WTC11 (cell line): ENCODE measurements at regions of chr2 and their contacts with region 1.

Region 1: GRCh38 chr2:43559391-43560230 is 36.2 kb downstream of the THADA start:
- DNase-seq: no peak
- ATAC-seq: no peak
- H3K4me3 Mint-ChIP-seq: no peak overlapping the region
- H3K27ac Mint-ChIP-seq: no peak overlapping the region
- H3K4me1 Mint-ChIP-seq: peaks cover 13% of the 10 kb centered on the region
- H3K27me3 Mint-ChIP-seq: no peaks in the 10 kb centered on the region; the same call in 1 of the 2 replicates
- CTCF ChIP-seq: no peak

Region 2: GRCh38 chr2:43513216-43513615 is 46.4 kb before region 1 on chr2:
- CTCF ChIA-PET with region 1: no interaction called
- POLR2A ChIA-PET with region 1: no interaction called
- DNase-seq: no peak
- ATAC-seq: no peak
- H3K4me3 Mint-ChIP-seq: no peak overlapping the region
- H3K27ac Mint-ChIP-seq: no peak overlapping the region
- H3K4me1 Mint-ChIP-seq: peaks cover 12% of the 10 kb centered on the region
- H3K27me3 Mint-ChIP-seq: no peaks in the 10 kb centered on the region
- CTCF ChIP-seq: no peak

Region 3: GRCh38 chr2:43542285-43542937 is 17.2 kb before region 1 on chr2:
- CTCF ChIA-PET with region 1: no interaction called
- POLR2A ChIA-PET with region 1: no interaction called
- DNase-seq: no peak
- ATAC-seq: no peak; the same call in 1 of the 2 replicates
- H3K4me3 Mint-ChIP-seq: no peak overlapping the region
- H3K27ac Mint-ChIP-seq: no peak overlapping the region
- H3K4me1 Mint-ChIP-seq: no peaks in the 10 kb centered on the region
- H3K27me3 Mint-ChIP-seq: no peaks in the 10 kb centered on the region; the same call in 1 of the 2 replicates
- CTCF ChIP-seq: peak; percentile 43; the same call in 1 of the 2 replicates

Region 4: GRCh38 chr2:43576981-43577892 is 17.6 kb after region 1 on chr2:
- CTCF ChIA-PET with region 1: interaction called, 13 read pairs
- POLR2A ChIA-PET with region 1: no interaction called
- DNase-seq: no peak
- ATAC-seq: no peak
- H3K4me3 Mint-ChIP-seq: no peak overlapping the region
- H3K27ac Mint-ChIP-seq: no peak overlapping the region
- H3K4me1 Mint-ChIP-seq: no peaks in the 10 kb centered on the region
- H3K27me3 Mint-ChIP-seq: no peaks in the 10 kb centered on the region
- CTCF ChIP-seq: 0 out of 2 replicates have a peak, but pooled peaks have one; percentile 25